ENCODE measurements at regions of chr1 and their contacts with region 1.

Region 1: GRCh38 chr1:26999440-26999987 is 6.0 kb downstream of the TRNP1 start:
- DNase-seq: peak; percentile 42
- H3K4me3 ChIP-seq: no peak overlapping the region
- H3K27ac ChIP-seq: no peak overlapping the region
- H3K4me1 ChIP-seq: peaks cover 20% of the 10 kb centered on the region
- H3K27me3 ChIP-seq: peaks cover 10% of the 10 kb centered on the region
- CTCF ChIP-seq: no peak

Region 2: DNA sequence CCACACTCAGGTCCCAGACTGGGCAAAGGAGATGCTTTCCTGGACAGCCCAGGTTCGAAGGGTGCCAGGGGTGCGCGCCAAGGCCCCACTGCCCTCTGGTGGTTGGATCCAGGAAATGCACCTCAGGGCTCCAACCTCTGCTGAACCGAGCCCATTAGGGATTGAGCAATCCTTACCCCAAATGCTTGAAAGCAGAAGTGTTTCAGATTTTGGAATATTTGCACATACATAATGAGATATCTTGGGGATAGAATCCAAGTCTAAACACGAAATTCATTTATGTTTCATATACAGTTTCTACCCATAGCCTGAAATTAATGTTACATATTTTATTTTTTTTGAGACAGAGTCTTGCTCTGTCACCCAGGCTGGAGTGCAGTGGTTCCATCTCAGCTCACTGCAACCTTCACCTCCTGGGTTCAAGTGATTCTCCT is 98.0 kb after region 1 on chr1:
- CTCF ChIA-PET with region 1: interaction called, 5 read pairs
- POLR2A ChIA-PET with region 1: no interaction called
- intact Hi-C with region 1: loop called (anchors 1 kb)
- DNase-seq: peak; percentile 86
- H3K4me3 ChIP-seq: no peak overlapping the region
- H3K27ac ChIP-seq: no peak overlapping the region
- H3K4me1 ChIP-seq: peaks cover 16% of the 10 kb centered on the region
- H3K27me3 ChIP-seq: no peaks in the 10 kb centered on the region
- CTCF ChIP-seq: peak; percentile 95

Measured in A673 (cell line).